PC-9 (cell line): ENCODE measurements at regions of chr12 and their contacts with region 1.

Region 1: GRCh38 chr12:121110211-121110940 is 22.3 kb upstream of the P2RX7 start:
- DNase-seq: peak; percentile 38 to 52
- H3K4me3 ChIP-seq: no peak overlapping the region
- H3K27ac ChIP-seq: no peak overlapping the region
- H3K4me1 ChIP-seq: peaks cover 7% of the 10 kb centered on the region
- H3K27me3 ChIP-seq: no peaks in the 10 kb centered on the region
- CTCF ChIP-seq: peak; percentile 97

Region 2: DNA sequence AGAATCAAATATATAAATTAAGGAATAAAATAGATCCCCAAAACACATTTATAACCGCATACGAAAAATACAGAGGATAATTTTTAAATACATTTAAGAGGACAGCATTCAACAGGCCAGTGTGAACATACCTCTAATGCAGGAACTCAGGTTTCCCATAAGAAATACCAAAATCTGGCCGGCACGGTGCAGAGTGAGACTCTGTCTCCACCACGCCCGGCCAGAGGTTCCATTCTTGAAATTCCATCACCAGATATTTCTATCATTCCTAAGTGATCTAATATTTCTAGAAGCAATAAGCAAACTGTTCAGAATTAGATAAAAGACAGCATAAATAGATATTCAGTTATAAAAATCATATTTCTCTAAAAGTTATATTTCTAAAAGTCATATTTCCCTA is 41.2 kb before region 1 on chr12:
- CTCF ChIA-PET with region 1: no interaction called
- POLR2A ChIA-PET with region 1: no interaction called
- intact Hi-C with region 1: loop called (anchors 2 kb)
- DNase-seq: peak in 1 of 2 experiments; percentile 4
- H3K4me3 ChIP-seq: no peak overlapping the region
- H3K27ac ChIP-seq: no peak overlapping the region
- H3K4me1 ChIP-seq: no peaks in the 10 kb centered on the region
- H3K27me3 ChIP-seq: no peaks in the 10 kb centered on the region
- CTCF ChIP-seq: no peak

Region 3: GRCh38 chr12:121232977-121233627 is 122.7 kb after region 1 on chr12:
- CTCF ChIA-PET with region 1: interaction called, 11 read pairs
- POLR2A ChIA-PET with region 1: no interaction called
- intact Hi-C with region 1: loop called (anchors 5 kb)
- DNase-seq: no peak
- H3K4me3 ChIP-seq: no peak overlapping the region
- H3K27ac ChIP-seq: no peak overlapping the region
- H3K4me1 ChIP-seq: peaks cover 24% of the 10 kb centered on the region
- H3K27me3 ChIP-seq: no peaks in the 10 kb centered on the region
- CTCF ChIP-seq: no peak

Region 4: GRCh38 chr12:121240484-121241101 is 130.2 kb after region 1 on chr12:
- CTCF ChIA-PET with region 1: interaction called, 11 read pairs
- POLR2A ChIA-PET with region 1: no interaction called
- intact Hi-C with region 1: no loop called
- DNase-seq: no peak
- H3K4me3 ChIP-seq: no peak overlapping the region
- H3K27ac ChIP-seq: no peak overlapping the region
- H3K4me1 ChIP-seq: no peaks in the 10 kb centered on the region
- H3K27me3 ChIP-seq: no peaks in the 10 kb centered on the region
- CTCF ChIP-seq: no peak

Region 5: DNA sequence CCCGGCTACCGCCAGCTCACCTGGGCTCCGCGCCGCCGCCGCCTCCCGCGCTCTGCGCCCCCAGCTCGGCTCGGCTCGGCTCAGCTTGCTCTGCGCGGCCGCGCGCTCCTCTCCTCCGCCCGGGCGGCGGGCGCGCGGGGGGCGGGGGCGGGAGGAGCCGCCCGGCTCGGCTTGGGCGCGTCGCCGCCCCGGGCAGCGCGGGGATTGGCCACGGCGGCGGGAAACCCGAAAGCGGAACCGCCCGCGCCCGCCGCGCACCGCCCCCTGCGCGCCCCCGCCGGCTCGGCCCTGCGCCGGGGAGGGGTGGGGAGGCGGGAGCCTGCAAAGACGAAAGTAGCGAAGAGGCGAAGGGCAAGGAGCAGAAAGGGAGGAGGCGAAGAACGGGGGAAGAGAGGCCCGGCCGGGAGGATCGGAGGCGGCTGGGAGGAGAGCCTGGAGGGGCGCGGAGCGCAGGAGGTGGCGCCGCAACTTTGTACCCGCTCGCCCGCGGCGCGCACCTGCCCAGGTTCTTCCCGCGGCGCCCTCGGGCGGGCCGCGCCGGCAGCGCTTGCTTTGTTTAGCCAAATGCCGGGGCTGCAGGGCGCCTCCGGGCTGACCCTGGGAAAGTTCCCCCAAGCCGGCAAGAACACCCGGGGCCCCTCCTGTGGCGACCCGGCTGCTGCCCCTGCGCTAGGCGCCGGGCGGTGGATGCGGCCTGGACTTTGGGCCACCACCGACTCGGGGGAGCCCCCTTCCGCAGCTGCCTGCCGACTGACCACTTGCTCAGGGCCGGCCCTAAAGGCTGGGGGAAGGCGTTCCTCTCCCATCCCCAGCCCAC is 186.4 kb after region 1 on chr12 and contains the start of gene CAMKK2:
- CTCF ChIA-PET with region 1: no interaction called
- POLR2A ChIA-PET with region 1: interaction called, 13 read pairs
- intact Hi-C with region 1: no loop called
- DNase-seq: peak; percentile 44 to 90
- H3K4me3 ChIP-seq: peak within 1 kb of the TSS; percentile 95
- H3K27ac ChIP-seq: peak within 1 kb of the TSS; percentile 12; the same call in 1 of the 2 replicates
- H3K4me1 ChIP-seq: peaks cover 6% of the 10 kb centered on the region
- H3K27me3 ChIP-seq: no peaks in the 10 kb centered on the region
- CTCF ChIP-seq: no peak; the same call in 1 of the 2 replicates
- total RNA-seq, gene CAMKK2: 26.7 and 37.6 TPM in 2 replicates

Region 6: GRCh38 chr12:121550974-121551634 is 440.7 kb after region 1 on chr12:
- CTCF ChIA-PET with region 1: no interaction called
- POLR2A ChIA-PET with region 1: no interaction called
- intact Hi-C with region 1: no loop called
- DNase-seq: no peak
- H3K4me3 ChIP-seq: no peak overlapping the region
- H3K27ac ChIP-seq: no peak overlapping the region
- H3K4me1 ChIP-seq: no peaks in the 10 kb centered on the region
- H3K27me3 ChIP-seq: no peaks in the 10 kb centered on the region
- CTCF ChIP-seq: no peak